Panc1 (cell line): ENCODE measurements at regions of chr20 and their contacts with region 1.

Region 1: GRCh38 chr20:35447082-35447789 is 8.2 kb upstream of the CEP250 start:
- DNase-seq: peak; percentile 89
- ATAC-seq: peak; percentile 94
- H3K4me3 ChIP-seq: peak overlapping the region; percentile 30 to 50
- H3K27ac ChIP-seq: no peak overlapping the region
- H3K4me1 ChIP-seq: peaks cover 3% of the 10 kb centered on the region; the same call in 1 of the 2 replicates
- H3K27me3 ChIP-seq: no peaks in the 10 kb centered on the region
- CTCF ChIP-seq: peak; percentile 99

Region 2: GRCh38 chr20:35303735-35304491 is 143.3 kb before region 1 on chr20:
- CTCF ChIA-PET with region 1: interaction called, 5 read pairs
- POLR2A ChIA-PET with region 1: interaction called, 4 read pairs
- in situ Hi-C with region 1: no loop called
- intact Hi-C with region 1: loop called (anchors 5 kb)
- DNase-seq: peak; percentile 91
- ATAC-seq: peak; percentile 63
- H3K4me3 ChIP-seq: no peak overlapping the region
- H3K27ac ChIP-seq: peak overlapping the region; percentile 97
- H3K4me1 ChIP-seq: peaks cover 71% of the 10 kb centered on the region
- H3K27me3 ChIP-seq: no peaks in the 10 kb centered on the region
- CTCF ChIP-seq: peak; percentile 96